ENCODE measurements at regions of chr2 and their contacts with region 1.

Region 1: DNA sequence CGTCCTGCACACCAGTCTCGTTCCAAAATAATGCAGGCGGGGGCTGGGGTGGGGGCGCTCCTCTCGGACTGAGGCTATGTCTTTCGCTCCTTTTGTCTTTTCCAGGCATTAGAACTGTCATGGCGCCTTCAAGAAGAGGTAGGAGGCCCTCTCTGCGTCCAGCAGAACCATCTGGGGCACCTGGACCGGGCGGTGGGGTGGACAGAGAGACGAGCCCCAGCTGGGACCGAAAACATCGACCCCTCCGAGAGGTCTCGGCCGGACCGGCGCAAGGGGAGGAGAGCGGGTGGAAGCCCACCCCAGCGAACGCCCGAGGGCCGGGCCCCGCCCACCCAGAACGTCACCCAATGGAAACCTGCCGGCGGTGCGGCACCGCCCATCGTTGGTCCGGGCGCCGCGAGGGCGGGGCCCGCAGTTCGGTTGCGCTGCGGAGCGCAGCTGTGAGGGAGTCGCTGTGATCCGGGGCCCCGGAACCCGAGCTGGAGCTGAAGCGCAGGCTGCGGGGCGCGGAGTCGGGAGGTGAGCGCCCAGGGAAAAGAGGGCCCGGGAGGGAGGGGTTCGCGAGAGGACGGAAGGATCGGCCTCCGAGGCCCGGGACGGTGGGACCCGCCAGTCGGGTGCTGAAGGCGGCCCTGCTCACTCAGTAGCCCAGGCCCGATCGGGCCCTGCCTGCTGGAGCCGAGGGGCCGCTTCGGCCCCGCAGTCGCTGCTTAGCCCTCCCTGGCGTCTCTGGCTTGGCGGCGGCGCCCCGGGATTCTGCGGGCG is at the start of gene NRBP1:
- DNase-seq: peak; percentile 91
- H3K4me3 Mint-ChIP-seq: peak within 1 kb of the TSS; percentile 98
- H3K27ac Mint-ChIP-seq: peak within 1 kb of the TSS; percentile 98
- H3K4me1 Mint-ChIP-seq: peaks cover 25% of the 10 kb centered on the region
- H3K27me3 Mint-ChIP-seq: no peaks in the 10 kb centered on the region
- total RNA-seq, gene NRBP1: 98.0 and 106 TPM in 2 replicates

Region 2: DNA sequence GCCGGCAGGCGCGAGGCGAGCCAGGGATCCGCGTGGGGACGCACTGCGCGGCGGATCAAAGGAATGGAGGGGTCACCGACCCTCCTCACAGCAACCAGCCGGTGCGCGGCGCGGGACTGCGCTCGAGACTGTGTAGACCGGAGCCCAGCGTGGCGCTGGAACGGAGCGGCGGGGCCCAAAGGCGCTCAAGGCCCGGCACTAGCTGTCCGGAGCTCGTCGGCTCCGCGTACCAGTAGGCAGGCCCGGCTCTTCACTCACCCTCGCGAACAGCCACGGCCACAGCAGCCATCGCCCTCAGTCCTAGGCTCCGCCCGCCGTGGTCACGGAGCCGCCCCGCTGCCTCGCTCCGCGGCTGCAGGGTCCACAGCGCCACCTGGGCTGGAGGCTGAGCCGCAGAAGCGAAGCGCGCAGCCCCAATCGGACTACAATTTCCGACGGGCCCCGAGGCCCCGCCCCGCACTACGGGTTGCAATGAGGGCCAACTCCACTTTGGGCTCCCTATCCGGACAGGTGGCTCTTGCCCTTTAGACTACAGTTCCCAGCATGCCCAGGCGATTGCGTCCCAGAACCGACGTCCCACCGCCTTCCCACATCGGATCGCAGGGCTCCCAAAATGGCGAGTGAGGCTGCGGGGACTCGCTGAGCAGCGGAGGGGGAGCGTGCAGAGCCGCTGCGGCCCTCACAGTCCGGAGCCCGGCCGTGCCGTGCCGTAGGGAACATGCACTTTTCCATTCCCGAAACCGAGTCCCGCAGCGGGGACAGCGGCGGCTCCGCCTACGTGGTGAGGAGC is 58.2 kb before region 1 on chr2 and contains the starts of genes EIF2B4 and SNX17:
- intact Hi-C with region 1: loop called (anchors 5 kb)
- DNase-seq: peak; percentile 100
- H3K4me3 Mint-ChIP-seq: peak within 1 kb of the TSS; percentile 90
- H3K27ac Mint-ChIP-seq: peak within 1 kb of the TSS; percentile 97
- H3K4me1 Mint-ChIP-seq: peaks cover 23% of the 10 kb centered on the region
- H3K27me3 Mint-ChIP-seq: no peaks in the 10 kb centered on the region
- total RNA-seq, gene EIF2B4: 43.4 and 44.8 TPM in 2 replicates
- total RNA-seq, gene SNX17: 117 and 120 TPM in 2 replicates

Region 3: GRCh38 chr2:27489498-27490397 is 61.4 kb after region 1 on chr2 and contains the start of gene IFT172:
- intact Hi-C with region 1: loop called (anchors 1 kb)
- DNase-seq: peak; percentile 99
- H3K4me3 Mint-ChIP-seq: peak within 1 kb of the TSS; percentile 86
- H3K27ac Mint-ChIP-seq: peak within 1 kb of the TSS; percentile 74
- H3K4me1 Mint-ChIP-seq: peaks cover 19% of the 10 kb centered on the region
- H3K27me3 Mint-ChIP-seq: peaks cover 13% of the 10 kb centered on the region
- total RNA-seq, gene IFT172: 16.4 and 18.8 TPM in 2 replicates

Region 4: GRCh38 chr2:27638037-27638637 is 209.7 kb after region 1 on chr2:
- intact Hi-C with region 1: loop called (anchors 2 kb)
- DNase-seq: no peak
- H3K4me3 Mint-ChIP-seq: peak overlapping the region; percentile 67
- H3K27ac Mint-ChIP-seq: peak overlapping the region; percentile 97
- H3K4me1 Mint-ChIP-seq: peaks cover 38% of the 10 kb centered on the region
- H3K27me3 Mint-ChIP-seq: no peaks in the 10 kb centered on the region